B cell (primary cell): ENCODE measurements at regions of chr11 and their contacts with region 1.

Region 1: GRCh38 chr11:61161190-61162091 is at the start of gene VPS37C:
- DNase-seq: peak; percentile 98
- ATAC-seq: peak; percentile 75
- H3K4me3 ChIP-seq: peak within 1 kb of the TSS; percentile 32 to 68 (median 60)
- H3K4me3 Mint-ChIP-seq: peak within 1 kb of the TSS; percentile 91
- H3K27ac ChIP-seq: peak within 1 kb of the TSS; percentile 94 to 95
- H3K27ac Mint-ChIP-seq: peak within 1 kb of the TSS; percentile 96
- H3K4me1 ChIP-seq: peaks cover 42 to 50% of the 10 kb centered on the region in 2 donors
- H3K4me1 Mint-ChIP-seq: peaks cover 54% of the 10 kb centered on the region
- H3K27me3 ChIP-seq: no peaks in the 10 kb centered on the region
- H3K27me3 Mint-ChIP-seq: no peaks in the 10 kb centered on the region
- CTCF ChIP-seq: no peak
- total RNA-seq, gene VPS37C: 18.4 and 20.1 TPM in 2 replicates

Region 2: DNA sequence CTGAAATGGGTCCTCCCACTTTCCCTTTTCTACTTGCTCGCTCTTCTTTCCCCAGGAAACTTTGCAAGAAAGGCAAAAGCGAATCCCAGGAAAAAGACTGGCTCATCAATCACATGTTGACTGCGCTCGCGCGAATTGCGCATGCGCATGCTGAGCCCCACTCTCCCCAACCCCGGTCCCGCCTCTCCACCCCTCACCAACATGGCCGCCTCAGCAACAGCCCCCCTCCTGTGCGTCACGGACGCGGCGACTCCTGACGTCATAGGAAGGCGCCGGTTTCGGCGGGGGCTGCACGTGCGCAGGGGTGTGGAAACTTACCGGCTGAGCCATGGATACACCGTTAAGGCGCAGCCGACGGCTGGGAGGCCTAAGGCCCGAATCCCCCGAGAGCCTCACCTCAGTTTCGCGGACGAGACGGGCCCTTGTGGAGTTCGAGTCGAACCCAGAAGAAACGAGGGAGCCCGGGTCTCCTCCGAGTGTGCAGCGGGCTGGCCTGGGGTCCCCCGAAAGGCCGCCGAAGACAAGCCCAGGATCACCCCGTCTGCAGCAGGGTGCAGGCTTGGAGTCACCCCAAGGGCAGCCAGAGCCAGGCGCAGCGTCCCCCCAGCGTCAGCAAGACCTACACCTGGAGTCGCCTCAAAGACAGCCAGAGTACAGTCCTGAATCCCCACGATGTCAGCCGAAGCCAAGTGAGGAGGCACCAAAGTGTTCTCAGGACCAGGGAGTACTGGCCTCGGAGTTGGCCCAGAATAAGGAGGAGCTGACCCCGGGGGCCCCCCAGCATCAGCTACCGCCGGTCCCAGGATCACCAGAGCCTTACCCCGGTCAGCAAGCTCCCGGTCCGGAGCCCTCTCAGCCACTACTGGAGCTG is 319.4 kb before region 1 on chr11 and contains the start of gene CCDC86:
- CTCF ChIA-PET with region 1: no interaction called
- POLR2A ChIA-PET with region 1: no interaction called
- intact Hi-C with region 1: loop called (anchors 2 kb)
- DNase-seq: peak; percentile 98
- ATAC-seq: peak; percentile 97
- H3K4me3 ChIP-seq: peak within 1 kb of the TSS; percentile 54 to 97 (median 88)
- H3K4me3 Mint-ChIP-seq: peak within 1 kb of the TSS; percentile 93
- H3K27ac ChIP-seq: peak within 1 kb of the TSS; percentile 49 to 81
- H3K27ac Mint-ChIP-seq: peak within 1 kb of the TSS; percentile 93
- H3K4me1 ChIP-seq: peaks cover 32 to 33% of the 10 kb centered on the region in 2 donors
- H3K4me1 Mint-ChIP-seq: peaks cover 48% of the 10 kb centered on the region
- H3K27me3 ChIP-seq: no peaks in the 10 kb centered on the region
- H3K27me3 Mint-ChIP-seq: no peaks in the 10 kb centered on the region
- CTCF ChIP-seq: no peak
- total RNA-seq, gene CCDC86: 9.5 and 10.5 TPM in 2 replicates

Region 3: DNA sequence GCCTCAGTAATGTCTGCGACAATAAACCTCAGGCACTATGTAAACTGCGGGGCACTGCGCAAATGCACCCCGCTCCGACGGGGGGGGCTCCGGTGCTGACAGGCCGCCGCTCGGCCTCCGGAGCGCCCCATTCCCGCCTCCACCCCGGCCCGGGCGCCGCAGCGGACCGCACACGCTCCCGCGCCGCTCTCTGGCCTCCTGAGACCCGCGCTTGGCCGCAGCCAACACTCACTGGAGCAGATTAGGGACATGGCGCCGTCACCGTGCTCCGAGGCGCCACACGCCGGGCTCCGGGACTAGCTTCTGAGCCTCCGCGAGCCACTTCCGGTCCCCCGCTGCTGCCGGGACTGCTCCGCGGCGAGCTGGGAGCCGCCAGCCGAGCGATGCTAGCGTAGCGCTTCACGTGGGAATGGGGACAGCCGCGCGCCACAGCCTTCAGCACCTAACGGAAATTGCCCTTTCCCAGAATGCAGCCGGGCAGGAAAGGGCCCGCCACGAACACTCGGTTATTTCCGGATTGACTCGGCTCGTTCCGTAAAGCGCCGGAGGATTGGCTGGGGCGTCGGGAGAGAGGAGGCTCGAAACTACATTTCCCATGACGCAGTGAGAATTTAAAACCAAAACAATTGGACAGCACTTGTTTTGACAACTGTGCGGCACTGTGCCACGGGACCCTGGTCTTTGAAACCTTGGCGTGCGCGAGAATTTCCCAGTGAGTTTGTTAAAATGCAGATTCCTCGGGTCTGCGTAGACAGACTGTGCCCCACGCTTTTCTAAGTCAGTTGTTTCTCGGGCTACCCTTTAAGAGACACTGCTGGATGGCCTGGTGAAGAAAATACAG is 255.1 kb before region 1 on chr11 and contains the start of gene PRPF19:
- CTCF ChIA-PET with region 1: no interaction called
- POLR2A ChIA-PET with region 1: no interaction called
- intact Hi-C with region 1: loop called (anchors 1 kb)
- DNase-seq: peak; percentile 98
- ATAC-seq: peak; percentile 89
- H3K4me3 ChIP-seq: peak within 1 kb of the TSS; percentile 72 to 98 (median 81)
- H3K4me3 Mint-ChIP-seq: peak within 1 kb of the TSS; percentile 92
- H3K27ac ChIP-seq: peak within 1 kb of the TSS; percentile 80 to 83
- H3K27ac Mint-ChIP-seq: peak within 1 kb of the TSS; percentile 97
- H3K4me1 ChIP-seq: peaks cover 47 to 51% of the 10 kb centered on the region in 2 donors
- H3K4me1 Mint-ChIP-seq: peaks cover 65% of the 10 kb centered on the region
- H3K27me3 ChIP-seq: no peaks in the 10 kb centered on the region
- H3K27me3 Mint-ChIP-seq: no peaks in the 10 kb centered on the region
- CTCF ChIP-seq: no peak
- total RNA-seq, gene PRPF19: 80.4 and 89.9 TPM in 2 replicates

Region 4: DNA sequence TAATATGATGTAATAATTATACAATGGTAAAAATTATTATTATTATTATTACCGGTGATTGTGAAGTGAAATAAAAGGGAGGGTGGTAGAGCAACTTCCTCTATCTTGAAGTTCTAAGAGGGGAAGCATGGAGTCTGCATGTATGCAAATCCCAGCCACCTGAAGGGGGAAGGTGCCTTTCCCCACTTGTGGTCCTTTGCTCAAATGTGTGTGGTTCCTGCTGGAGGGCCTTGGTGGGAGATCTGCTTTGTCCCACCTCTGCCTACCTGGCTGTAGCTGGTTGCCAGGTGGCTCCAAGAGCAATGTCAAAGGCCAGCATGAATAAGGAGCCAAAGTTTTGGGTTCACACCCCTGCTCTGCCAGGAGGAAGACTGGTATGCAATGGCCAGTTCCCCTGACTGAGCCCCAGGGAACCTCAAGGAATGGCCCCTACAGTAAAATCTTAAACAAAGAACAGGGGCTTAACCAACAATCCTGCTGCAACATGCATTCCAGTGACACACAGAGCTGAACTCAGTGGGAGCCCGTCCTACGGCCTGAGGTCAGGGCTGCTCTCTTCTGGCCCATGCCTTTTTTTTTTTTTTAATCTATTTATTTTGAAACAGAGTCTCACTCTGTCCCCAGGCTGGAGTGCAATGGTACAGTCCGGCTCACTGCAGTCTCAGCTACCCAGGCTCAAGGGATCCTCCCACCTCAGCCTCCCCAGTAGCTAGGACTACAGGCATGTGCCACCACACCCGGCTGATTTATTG is 228.7 kb before region 1 on chr11:
- CTCF ChIA-PET with region 1: no interaction called
- POLR2A ChIA-PET with region 1: no interaction called
- intact Hi-C with region 1: loop called (anchors 1 kb)
- DNase-seq: peak; percentile 80
- ATAC-seq: peak; percentile 52
- H3K4me3 ChIP-seq: peak overlapping the region in 1 of 5 experiments; percentile 56
- H3K4me3 Mint-ChIP-seq: peak overlapping the region; percentile 74
- H3K27ac ChIP-seq: peak overlapping the region; percentile 72 to 90
- H3K27ac Mint-ChIP-seq: peak overlapping the region; percentile 91
- H3K4me1 ChIP-seq: peaks cover 26 to 44% of the 10 kb centered on the region in 2 donors
- H3K4me1 Mint-ChIP-seq: peaks cover 46% of the 10 kb centered on the region
- H3K27me3 ChIP-seq: no peaks in the 10 kb centered on the region
- H3K27me3 Mint-ChIP-seq: no peaks in the 10 kb centered on the region
- CTCF ChIP-seq: no peak

Region 5: GRCh38 chr11:61028272-61028761 is 133.1 kb before region 1 on chr11:
- CTCF ChIA-PET with region 1: no interaction called
- POLR2A ChIA-PET with region 1: no interaction called
- intact Hi-C with region 1: no loop called
- DNase-seq: peak; percentile 62
- ATAC-seq: peak; percentile 88
- H3K4me3 ChIP-seq: no peak overlapping the region
- H3K4me3 Mint-ChIP-seq: peak overlapping the region; percentile 67
- H3K27ac ChIP-seq: no peak overlapping the region
- H3K27ac Mint-ChIP-seq: peak overlapping the region; percentile 76
- H3K4me1 ChIP-seq: peaks cover 40 to 45% of the 10 kb centered on the region in 2 donors
- H3K4me1 Mint-ChIP-seq: peaks cover 48% of the 10 kb centered on the region
- H3K27me3 ChIP-seq: no peaks in the 10 kb centered on the region
- H3K27me3 Mint-ChIP-seq: no peaks in the 10 kb centered on the region
- CTCF ChIP-seq: no peak

Region 6: DNA sequence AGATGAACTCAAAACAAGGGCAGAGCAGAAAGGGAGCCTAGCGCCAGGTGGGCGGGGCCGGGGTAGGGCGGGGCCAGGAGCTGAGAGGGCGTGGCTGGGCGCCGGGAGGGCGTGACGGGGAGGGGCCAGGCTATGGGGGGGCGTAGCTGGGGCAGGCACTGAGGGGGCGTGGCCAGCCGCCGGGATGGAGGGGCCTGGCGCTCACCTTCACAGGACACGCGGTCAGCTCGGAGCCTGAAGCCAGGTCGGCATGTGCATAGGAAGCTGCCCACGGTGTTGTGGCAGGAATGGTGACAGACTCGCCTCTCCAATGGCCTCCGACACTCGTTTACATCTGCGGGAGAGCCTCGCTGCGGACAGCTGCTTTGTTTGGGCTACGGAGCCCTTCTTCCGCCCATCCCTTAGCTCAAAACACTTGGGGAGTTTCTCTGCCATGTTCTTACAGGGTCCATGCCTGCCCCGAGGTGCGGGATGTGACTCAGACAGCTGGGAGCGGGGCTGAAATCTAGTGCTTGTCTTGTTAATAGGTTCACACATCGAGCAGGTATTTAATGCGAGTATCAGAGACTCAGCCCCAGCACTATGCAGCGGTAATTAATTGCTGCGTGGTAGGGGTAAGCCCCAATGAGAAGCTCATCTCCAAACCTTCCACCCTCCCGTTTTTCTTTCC is 120.3 kb after region 1 on chr11:
- CTCF ChIA-PET with region 1: no interaction called
- POLR2A ChIA-PET with region 1: no interaction called
- intact Hi-C with region 1: no loop called
- DNase-seq: no peak
- ATAC-seq: no peak
- H3K4me3 ChIP-seq: no peak overlapping the region
- H3K4me3 Mint-ChIP-seq: no peak overlapping the region
- H3K27ac ChIP-seq: no peak overlapping the region
- H3K27ac Mint-ChIP-seq: no peak overlapping the region
- H3K4me1 ChIP-seq: no peaks in the 10 kb centered on the region
- H3K4me1 Mint-ChIP-seq: no peaks in the 10 kb centered on the region
- H3K27me3 ChIP-seq: no peaks in the 10 kb centered on the region
- H3K27me3 Mint-ChIP-seq: no peaks in the 10 kb centered on the region
- CTCF ChIP-seq: no peak